ENCODE measurements at regions of chr15 and their contacts with region 1.

Region 1: GRCh38 chr15:58639992-58640391 is 109.5 kb downstream of the ADAM10 start:
- DNase-seq: no peak
- H3K4me3 ChIP-seq: no peak overlapping the region
- H3K27ac ChIP-seq: no peak overlapping the region
- H3K4me1 ChIP-seq: no peaks in the 10 kb centered on the region
- H3K27me3 ChIP-seq: no peaks in the 10 kb centered on the region
- CTCF ChIP-seq: no peak

Region 2: DNA sequence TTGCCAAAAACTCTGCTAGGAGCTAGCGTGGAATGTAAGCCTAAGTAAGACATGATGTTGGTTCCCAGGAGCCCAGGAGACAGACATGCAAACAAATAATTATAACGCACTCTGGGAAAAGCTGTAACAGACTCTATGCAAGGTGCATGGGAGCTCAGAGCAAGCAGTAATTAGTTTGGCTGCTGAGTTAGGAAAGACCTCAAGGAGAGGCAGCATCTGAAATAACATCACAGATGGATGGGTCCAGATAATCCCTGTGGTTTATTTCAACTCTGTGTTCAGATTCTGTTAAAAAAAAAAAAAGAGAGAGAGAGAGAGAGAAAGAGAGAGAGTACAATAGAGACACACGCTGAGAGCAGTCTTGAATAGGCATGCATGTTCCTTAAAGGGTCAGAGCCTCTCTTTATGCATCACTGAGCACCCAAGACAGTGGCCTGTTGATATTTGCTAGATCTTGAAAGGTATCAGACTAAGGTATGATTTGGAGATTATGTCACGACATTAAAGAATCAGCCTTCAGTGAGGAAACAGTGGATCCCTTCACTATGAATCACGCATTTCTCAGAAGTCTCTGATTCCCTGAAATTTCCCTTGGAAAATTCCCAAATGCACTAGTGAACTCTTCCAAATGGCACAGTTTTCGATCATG is 332.6 kb before region 1 on chr15:
- CTCF ChIA-PET with region 1: no interaction called
- POLR2A ChIA-PET with region 1: interaction called, 11 read pairs
- intact Hi-C with region 1: no loop called
- DNase-seq: no peak
- H3K4me3 ChIP-seq: no peak overlapping the region
- H3K27ac ChIP-seq: no peak overlapping the region
- H3K4me1 ChIP-seq: no peaks in the 10 kb centered on the region
- H3K27me3 ChIP-seq: no peaks in the 10 kb centered on the region
- CTCF ChIP-seq: no peak

Measured in PC-9 (cell line).